PC-3 (cell line): ENCODE measurements at regions of chr3 and their contacts with region 1.

Region 1: GRCh38 chr3:190443257-190443656 is 6.4 kb downstream of the TMEM207 start:
- DNase-seq: peak; percentile 51
- ATAC-seq: peak; percentile 46
- H3K4me3 ChIP-seq: no peak overlapping the region
- H3K27ac ChIP-seq: no peak overlapping the region
- H3K4me1 ChIP-seq: peaks cover 14% of the 10 kb centered on the region; the same call in 1 of the 2 replicates
- H3K27me3 ChIP-seq: no peaks in the 10 kb centered on the region
- CTCF ChIP-seq: peak; percentile 78

Region 2: DNA sequence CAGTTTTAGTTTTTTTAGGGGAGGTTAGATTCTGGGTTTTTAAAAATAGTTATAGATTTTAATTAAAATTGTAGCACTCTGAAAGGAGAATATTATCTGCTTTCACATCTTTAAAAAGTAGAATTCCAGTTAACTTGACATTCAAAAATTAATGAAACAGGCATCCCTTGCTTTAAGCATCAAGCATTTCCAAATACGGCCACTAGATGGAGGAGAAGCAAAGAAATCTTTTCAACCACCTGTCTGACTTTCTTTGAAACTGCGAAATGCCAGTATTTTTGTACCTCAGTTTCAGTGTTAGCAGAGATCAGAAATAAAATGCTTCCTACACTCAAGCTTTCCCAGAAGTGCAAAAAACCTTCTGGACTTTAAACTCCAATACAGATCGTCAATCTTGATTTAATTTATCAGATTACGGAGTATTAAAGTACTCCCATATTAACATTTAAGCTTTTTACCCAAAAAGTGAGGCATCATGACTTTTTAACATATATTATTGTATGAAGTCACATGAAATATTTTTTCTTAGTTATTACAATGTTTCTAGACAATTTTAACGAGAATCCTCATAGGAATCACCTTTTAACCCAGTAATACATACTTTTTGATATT is 475.9 kb before region 1 on chr3:
- CTCF ChIA-PET with region 1: interaction called, 3 read pairs
- POLR2A ChIA-PET with region 1: no interaction called
- intact Hi-C with region 1: loop called (anchors 5 kb)
- DNase-seq: peak; percentile 85
- ATAC-seq: peak; percentile 58
- H3K4me3 ChIP-seq: no peak overlapping the region
- H3K27ac ChIP-seq: no peak overlapping the region
- H3K4me1 ChIP-seq: no peaks in the 10 kb centered on the region
- H3K27me3 ChIP-seq: no peaks in the 10 kb centered on the region
- CTCF ChIP-seq: peak; percentile 89

Region 3: GRCh38 chr3:190053919-190054672 is 389.2 kb before region 1 on chr3:
- CTCF ChIA-PET with region 1: no interaction called
- POLR2A ChIA-PET with region 1: interaction called, 13 read pairs
- intact Hi-C with region 1: no loop called
- DNase-seq: peak; percentile 77
- ATAC-seq: peak; percentile 94
- H3K4me3 ChIP-seq: no peak overlapping the region
- H3K27ac ChIP-seq: no peak overlapping the region
- H3K4me1 ChIP-seq: peaks cover 12% of the 10 kb centered on the region
- H3K27me3 ChIP-seq: no peaks in the 10 kb centered on the region
- CTCF ChIP-seq: no peak

Region 4: DNA sequence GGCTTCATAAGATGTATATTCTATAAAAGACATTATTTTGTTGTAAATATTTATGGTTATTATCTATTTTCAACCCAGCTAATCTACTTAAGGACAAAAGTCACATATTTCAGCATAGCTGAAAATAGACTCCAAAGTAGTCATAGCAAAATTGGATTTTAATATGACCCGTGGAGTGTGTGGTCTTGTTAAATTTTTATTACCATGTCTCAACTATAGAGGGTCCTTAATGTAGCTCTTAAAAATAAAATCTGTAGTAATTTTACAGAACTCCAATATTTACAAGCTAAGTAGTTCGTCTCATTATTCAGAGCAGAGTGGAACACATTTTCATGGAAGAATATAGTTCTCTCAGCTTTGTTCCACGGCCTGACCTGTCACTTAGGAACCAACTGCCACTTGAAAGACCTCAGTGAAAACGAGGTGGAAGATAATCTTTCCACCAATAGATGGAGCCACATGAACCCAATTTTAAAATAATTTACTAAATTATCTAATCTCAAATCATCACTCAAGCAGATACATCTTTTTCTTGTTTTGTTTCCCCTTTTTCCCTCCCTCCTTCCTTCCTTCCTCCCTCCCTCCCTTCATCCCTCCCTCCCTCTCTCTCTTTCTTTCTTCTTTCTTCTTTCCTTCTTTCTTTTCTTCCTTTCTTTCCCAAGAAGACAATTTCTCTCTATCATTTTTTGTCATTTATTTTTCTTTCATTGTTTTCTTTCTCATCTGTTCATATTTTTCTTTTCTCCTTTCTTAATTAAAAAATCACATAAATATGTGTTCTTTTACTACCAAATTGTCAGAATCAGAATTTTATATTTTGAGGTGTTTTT is 218.2 kb before region 1 on chr3:
- CTCF ChIA-PET with region 1: interaction called, 4 read pairs
- POLR2A ChIA-PET with region 1: no interaction called
- intact Hi-C with region 1: loop called (anchors 5 kb)
- DNase-seq: peak; percentile 78
- ATAC-seq: peak; percentile 73
- H3K4me3 ChIP-seq: no peak overlapping the region
- H3K27ac ChIP-seq: no peak overlapping the region
- H3K4me1 ChIP-seq: peaks cover 11% of the 10 kb centered on the region
- H3K27me3 ChIP-seq: no peaks in the 10 kb centered on the region
- CTCF ChIP-seq: peak; percentile 72

Region 5: GRCh38 chr3:190424478-190425439 is 18.5 kb before region 1 on chr3:
- CTCF ChIA-PET with region 1: interaction called, 13 read pairs
- POLR2A ChIA-PET with region 1: interaction called, 5 read pairs
- intact Hi-C with region 1: no loop called
- DNase-seq: peak; percentile 78
- ATAC-seq: peak; percentile 82
- H3K4me3 ChIP-seq: no peak overlapping the region
- H3K27ac ChIP-seq: no peak overlapping the region
- H3K4me1 ChIP-seq: no peaks in the 10 kb centered on the region
- H3K27me3 ChIP-seq: no peaks in the 10 kb centered on the region
- CTCF ChIP-seq: peak; percentile 81

Region 6: DNA sequence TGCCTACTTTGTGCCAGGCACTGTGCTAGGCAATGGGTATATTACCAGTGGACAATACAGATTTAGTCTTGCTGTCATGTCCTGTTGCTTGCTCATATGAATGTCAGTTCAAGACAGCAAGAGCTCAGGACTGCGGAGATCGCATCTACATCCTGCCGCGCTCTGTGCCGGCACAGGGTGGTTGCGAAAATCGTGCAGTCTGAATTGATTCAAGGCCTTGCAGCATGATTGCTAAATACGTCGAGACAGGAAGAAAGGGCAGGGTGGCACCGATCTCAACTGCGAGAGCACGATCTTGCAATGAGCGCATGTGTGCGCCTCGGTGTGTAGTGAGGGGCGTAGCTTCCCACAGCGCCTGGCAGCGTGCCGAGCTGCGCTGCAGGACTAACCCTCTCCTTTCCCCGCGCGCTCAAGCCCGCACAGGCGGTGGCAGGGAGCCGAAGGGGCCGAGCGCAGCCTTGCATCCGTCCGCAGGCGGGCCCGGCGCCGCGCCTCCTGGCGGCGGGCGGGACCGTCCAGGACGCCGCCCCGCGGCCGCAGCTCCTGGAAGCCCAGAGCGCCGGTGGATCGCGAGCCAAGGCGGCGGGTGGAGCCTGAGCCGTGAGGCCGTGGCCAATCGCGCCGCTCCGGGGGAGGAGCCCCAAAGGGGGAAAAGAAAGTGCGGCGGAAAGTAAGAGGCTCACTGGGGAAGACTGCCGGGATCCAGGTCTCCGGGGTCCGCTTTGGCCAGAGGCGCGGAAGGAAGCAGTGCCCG is 70.3 kb after region 1 on chr3 and contains the start of gene IL1RAP:
- CTCF ChIA-PET with region 1: interaction called, 4 read pairs
- POLR2A ChIA-PET with region 1: interaction called, 3 read pairs
- intact Hi-C with region 1: loop called (anchors 5 kb)
- DNase-seq: peak; percentile 96
- ATAC-seq: peak; percentile 91
- H3K4me3 ChIP-seq: peak within 1 kb of the TSS; percentile 95
- H3K27ac ChIP-seq: peak within 1 kb of the TSS; percentile 24
- H3K4me1 ChIP-seq: peaks cover 40% of the 10 kb centered on the region
- H3K27me3 ChIP-seq: no peaks in the 10 kb centered on the region
- CTCF ChIP-seq: peak; percentile 65
- total RNA-seq, gene IL1RAP: 5.0 and 13.4 TPM in 2 replicates

Region 7: GRCh38 chr3:190694335-190695001 is 251.2 kb after region 1 on chr3:
- CTCF ChIA-PET with region 1: no interaction called
- POLR2A ChIA-PET with region 1: no interaction called
- intact Hi-C with region 1: loop called (anchors 2 kb)
- DNase-seq: no peak
- ATAC-seq: no peak
- H3K4me3 ChIP-seq: no peak overlapping the region
- H3K27ac ChIP-seq: no peak overlapping the region
- H3K4me1 ChIP-seq: peaks cover 9% of the 10 kb centered on the region
- H3K27me3 ChIP-seq: no peaks in the 10 kb centered on the region
- CTCF ChIP-seq: no peak